CD8-positive, alpha-beta T cell (primary cell): ENCODE measurements at regions of chr15 and their contacts with region 1.

Region 1: GRCh38 chr15:100349696-100350433 is 8.1 kb upstream of the ADAMTS17 start:
- DNase-seq: peak; percentile 65 to 91 (median 85)
- ATAC-seq: peak; percentile 92
- H3K4me3 ChIP-seq: peak overlapping the region; percentile 88 to 99
- H3K4me3 Mint-ChIP-seq: peak overlapping the region; percentile 94
- H3K27ac ChIP-seq: peak overlapping the region; percentile 54 to 80
- H3K27ac Mint-ChIP-seq: peak overlapping the region; percentile 87
- H3K4me1 ChIP-seq: peaks cover 9% of the 10 kb centered on the region
- H3K4me1 Mint-ChIP-seq: peaks cover 9% of the 10 kb centered on the region
- H3K27me3 ChIP-seq: no peaks in the 10 kb centered on the region
- H3K27me3 Mint-ChIP-seq: peaks cover 20% of the 10 kb centered on the region
- CTCF ChIP-seq: peak; percentile 78

Region 2: GRCh38 chr15:100383302-100384107 is 33.6 kb after region 1 on chr15:
- CTCF ChIA-PET with region 1: interaction called, 33 read pairs
- POLR2A ChIA-PET with region 1: no interaction called
- intact Hi-C with region 1: no loop called
- DNase-seq: peak in 2 of 9 experiments; percentile 48 to 56
- ATAC-seq: no peak
- H3K4me3 ChIP-seq: no peak overlapping the region
- H3K4me3 Mint-ChIP-seq: no peak overlapping the region
- H3K27ac ChIP-seq: no peak overlapping the region
- H3K27ac Mint-ChIP-seq: no peak overlapping the region
- H3K4me1 ChIP-seq: no peaks in the 10 kb centered on the region
- H3K4me1 Mint-ChIP-seq: no peaks in the 10 kb centered on the region
- H3K27me3 ChIP-seq: no peaks in the 10 kb centered on the region
- H3K27me3 Mint-ChIP-seq: peaks cover 8% of the 10 kb centered on the region
- CTCF ChIP-seq: no peak

Region 3: GRCh38 chr15:100596792-100597191 is 246.9 kb after region 1 on chr15:
- CTCF ChIA-PET with region 1: interaction called, 30 read pairs
- POLR2A ChIA-PET with region 1: interaction called, 4 read pairs
- intact Hi-C with region 1: no loop called
- DNase-seq: peak; percentile 49 to 95 (median 84)
- ATAC-seq: peak; percentile 86
- H3K4me3 ChIP-seq: peak overlapping the region; percentile 41 to 47
- H3K4me3 Mint-ChIP-seq: peak overlapping the region; percentile 85
- H3K27ac ChIP-seq: peak overlapping the region; percentile 70 to 85
- H3K27ac Mint-ChIP-seq: peak overlapping the region; percentile 97
- H3K4me1 ChIP-seq: peaks cover 88% of the 10 kb centered on the region
- H3K4me1 Mint-ChIP-seq: peaks cover 77% of the 10 kb centered on the region
- H3K27me3 ChIP-seq: no peaks in the 10 kb centered on the region
- H3K27me3 Mint-ChIP-seq: no peaks in the 10 kb centered on the region
- CTCF ChIP-seq: no peak

Region 4: DNA sequence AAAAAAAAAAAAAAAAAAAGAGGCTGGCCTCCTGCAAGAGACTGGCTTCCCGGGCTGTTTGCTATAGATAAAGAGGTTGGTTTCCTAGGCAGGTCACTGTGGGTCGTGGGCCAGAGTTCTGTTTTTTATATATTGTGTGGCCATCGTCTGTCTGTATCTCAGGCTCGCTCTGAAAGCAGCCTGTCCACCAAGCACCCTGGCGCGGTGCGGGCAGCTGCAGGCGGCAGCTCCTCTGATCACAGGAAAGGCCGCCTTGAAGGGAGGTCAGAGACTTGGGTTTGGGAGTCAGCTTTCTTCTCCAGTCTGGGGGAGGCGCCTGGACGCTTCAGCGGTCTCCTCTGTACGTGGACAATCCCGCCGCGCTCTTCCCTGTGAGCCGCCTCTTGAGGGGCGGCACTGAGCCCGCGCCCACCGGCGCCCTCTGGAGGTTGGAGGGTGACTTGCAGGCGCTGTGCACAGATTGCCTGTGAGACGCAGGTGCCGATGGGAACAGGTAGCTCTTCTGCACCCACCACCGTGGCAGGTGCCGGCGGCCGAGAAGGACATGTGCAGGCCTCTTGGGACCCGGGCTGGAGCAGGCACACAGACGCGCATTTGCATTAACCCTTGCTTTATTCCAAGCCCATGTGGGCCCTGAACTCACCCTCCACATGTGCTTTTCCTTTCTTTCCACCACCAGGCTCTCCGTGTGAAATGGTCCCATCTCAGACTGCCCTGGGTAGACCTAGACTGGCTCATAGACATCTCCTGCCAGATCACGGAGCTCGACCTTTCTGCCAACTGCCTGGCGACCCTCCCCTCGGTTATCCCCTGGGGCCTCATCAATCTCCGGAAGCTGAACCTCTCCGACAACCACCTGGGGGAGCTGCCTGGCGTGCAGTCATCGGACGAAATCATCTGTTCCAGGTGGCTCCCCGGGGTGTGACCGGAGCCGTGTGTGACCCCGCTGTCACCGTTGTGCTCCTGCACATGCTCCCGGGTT is 658.6 kb after region 1 on chr15:
- CTCF ChIA-PET with region 1: interaction called, 17 read pairs
- POLR2A ChIA-PET with region 1: no interaction called
- intact Hi-C with region 1: no loop called
- DNase-seq: peak; percentile 74 to 92 (median 86)
- ATAC-seq: peak; percentile 98
- H3K4me3 ChIP-seq: peak overlapping the region; percentile 73 to 81
- H3K4me3 Mint-ChIP-seq: peak overlapping the region; percentile 88
- H3K27ac ChIP-seq: no peak overlapping the region
- H3K27ac Mint-ChIP-seq: peak overlapping the region; percentile 60
- H3K4me1 ChIP-seq: peaks cover 13% of the 10 kb centered on the region
- H3K4me1 Mint-ChIP-seq: peaks cover 19% of the 10 kb centered on the region
- H3K27me3 ChIP-seq: peaks cover 0 to 3% of the 10 kb centered on the region in 2 experiments
- H3K27me3 Mint-ChIP-seq: no peaks in the 10 kb centered on the region
- CTCF ChIP-seq: peak; percentile 96

Region 5: DNA sequence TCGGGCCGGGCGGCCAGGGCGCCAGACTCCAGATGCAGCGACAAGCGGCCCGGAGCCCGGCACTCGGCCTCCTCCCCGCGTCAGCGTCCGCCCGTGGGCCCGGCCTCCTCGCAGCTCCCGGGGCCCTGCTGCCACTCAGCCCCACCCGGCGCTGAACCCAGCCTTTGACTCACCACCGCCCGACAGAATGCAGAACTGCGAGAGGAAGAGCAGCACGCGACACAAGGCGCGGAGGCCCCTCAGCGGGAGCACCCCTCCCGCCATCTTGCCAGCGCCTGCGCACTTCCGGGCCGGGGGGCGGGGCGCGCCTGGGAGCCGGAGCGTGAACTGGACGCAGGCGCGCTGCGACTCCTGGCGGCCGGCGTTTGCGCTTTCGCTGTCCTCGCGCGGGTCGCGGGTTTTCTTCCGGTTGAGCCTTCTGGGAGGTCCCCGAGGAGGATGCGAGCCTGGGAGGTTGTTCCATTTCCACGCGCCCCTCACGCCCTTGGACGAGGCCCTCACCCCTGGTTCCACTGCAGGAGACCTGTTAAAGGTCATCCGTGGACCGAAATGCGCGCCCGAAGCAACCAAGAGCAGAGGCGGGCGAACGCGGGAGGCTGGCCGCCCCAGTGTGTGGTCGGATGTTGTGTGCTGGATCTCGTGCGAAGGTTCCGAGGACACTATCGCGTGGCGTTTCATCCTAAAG is 1302.4 kb after region 1 on chr15 and contains the start of gene TM2D3:
- CTCF ChIA-PET with region 1: no interaction called
- POLR2A ChIA-PET with region 1: no interaction called
- intact Hi-C with region 1: loop called in 1 of 2 experiments (anchors 10 kb)
- DNase-seq: peak; percentile 89 to 98 (median 95)
- ATAC-seq: peak; percentile 92
- H3K4me3 ChIP-seq: peak within 1 kb of the TSS; percentile 91 to 99
- H3K4me3 Mint-ChIP-seq: peak within 1 kb of the TSS; percentile 90
- H3K27ac ChIP-seq: peak within 1 kb of the TSS; percentile 97
- H3K27ac Mint-ChIP-seq: peak within 1 kb of the TSS; percentile 96
- H3K4me1 ChIP-seq: peaks cover 26% of the 10 kb centered on the region
- H3K4me1 Mint-ChIP-seq: peaks cover 39% of the 10 kb centered on the region
- H3K27me3 ChIP-seq: no peaks in the 10 kb centered on the region
- H3K27me3 Mint-ChIP-seq: no peaks in the 10 kb centered on the region
- CTCF ChIP-seq: peak; percentile 76
- total RNA-seq, gene TM2D3: 76.1 to 76.7 TPM